GM12878 (cell line): ENCODE measurements at regions of chr6 and their contacts with region 1.

Region 1: GRCh38 chr6:139369568-139370282 is 4.7 kb downstream of the CITED2 start:
- DNase-seq: no peak
- ATAC-seq: no peak
- H3K4me3 ChIP-seq: no peak overlapping the region
- H3K27ac ChIP-seq: no peak overlapping the region
- H3K4me1 ChIP-seq: 0 out of 2 replicates have a peak, but pooled peaks cover 2% of the 10 kb centered on the region
- H3K27me3 ChIP-seq: no peaks in the 10 kb centered on the region
- CTCF ChIP-seq: peak; percentile 43 to 74 (median 60); a peak in 5 of 6 replicates
- EP300 ChIP-seq: no peak
- POLR2A ChIP-seq: no peak
- RAD21 ChIP-seq: peak; percentile 95

Region 2: DNA sequence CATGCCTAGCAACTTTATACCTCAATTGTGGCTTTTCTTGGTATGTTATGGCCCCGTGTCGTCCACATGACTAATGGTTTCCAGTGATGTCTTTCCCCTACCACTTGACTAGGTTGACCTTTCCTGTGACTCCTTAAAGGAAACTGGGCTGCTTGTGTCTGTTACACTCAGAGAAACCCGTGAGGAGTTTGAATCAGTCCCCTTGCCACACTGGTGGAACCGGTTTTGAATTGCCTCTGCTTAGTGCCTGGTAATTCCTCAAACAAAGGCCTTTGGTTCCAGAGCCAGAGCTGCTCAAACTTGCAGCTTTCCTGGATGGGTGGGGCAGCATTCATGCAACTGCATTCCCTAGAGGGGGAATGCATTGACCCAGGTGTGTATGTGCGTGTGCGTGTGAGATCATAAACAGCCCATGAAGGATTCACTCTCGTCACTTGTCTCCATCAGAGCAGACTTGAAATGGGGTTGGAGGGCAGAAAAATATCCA is 551.9 kb before region 1 on chr6:
- CTCF ChIA-PET with region 1: interaction called, 63 read pairs
- POLR2A ChIA-PET with region 1: no interaction called
- RAD21 ChIA-PET with region 1: interaction called, 46 read pairs
- SMC1A ChIA-PET with region 1: interaction called, 38 read pairs
- in situ Hi-C with region 1: loop called (anchors 5 kb)
- intact Hi-C with region 1: loop called (anchors 1 kb)
- DNase-seq: no peak
- ATAC-seq: peak; percentile 51
- H3K4me3 ChIP-seq: no peak overlapping the region
- H3K27ac ChIP-seq: no peak overlapping the region; the same call in 1 of the 2 replicates
- H3K4me1 ChIP-seq: peaks cover 18% of the 10 kb centered on the region
- H3K27me3 ChIP-seq: no peaks in the 10 kb centered on the region
- CTCF ChIP-seq: no peak
- EP300 ChIP-seq: no peak
- POLR2A ChIP-seq: no peak
- RAD21 ChIP-seq: no peak

Region 3: GRCh38 chr6:139230391-139230840 is 139.3 kb before region 1 on chr6:
- CTCF ChIA-PET with region 1: interaction called, 39 read pairs
- POLR2A ChIA-PET with region 1: interaction called, 3 read pairs
- RAD21 ChIA-PET with region 1: interaction called, 49 read pairs
- SMC1A ChIA-PET with region 1: interaction called, 35 read pairs
- in situ Hi-C with region 1: loop called (anchors 5 kb)
- intact Hi-C with region 1: no loop called
- DNase-seq: no peak
- ATAC-seq: 0 out of 3 replicates have a peak, but pooled peaks have one; percentile 18
- H3K4me3 ChIP-seq: no peak overlapping the region
- H3K27ac ChIP-seq: no peak overlapping the region
- H3K4me1 ChIP-seq: no peaks in the 10 kb centered on the region
- H3K27me3 ChIP-seq: no peaks in the 10 kb centered on the region
- CTCF ChIP-seq: peak in 2 of 3 experiments; percentile 17 to 43; a peak in 3 of 6 replicates
- EP300 ChIP-seq: no peak
- POLR2A ChIP-seq: no peak
- RAD21 ChIP-seq: peak; percentile 63

Region 4: GRCh38 chr6:139323511-139324300 is 46.0 kb before region 1 on chr6:
- CTCF ChIA-PET with region 1: interaction called, 11 read pairs
- POLR2A ChIA-PET with region 1: no interaction called
- RAD21 ChIA-PET with region 1: interaction called, 10 read pairs
- SMC1A ChIA-PET with region 1: interaction called, 9 read pairs
- in situ Hi-C with region 1: no loop called
- intact Hi-C with region 1: no loop called
- DNase-seq: no peak
- ATAC-seq: peak; percentile 42
- H3K4me3 ChIP-seq: no peak overlapping the region
- H3K27ac ChIP-seq: peak overlapping the region; percentile 34; the same call in 1 of the 2 replicates
- H3K4me1 ChIP-seq: peaks cover 27% of the 10 kb centered on the region
- H3K27me3 ChIP-seq: no peaks in the 10 kb centered on the region
- CTCF ChIP-seq: no peak
- EP300 ChIP-seq: 0 out of 4 replicates have a peak, but pooled peaks of 1 of the 2 experiments have one; percentile 38
- POLR2A ChIP-seq: no peak
- RAD21 ChIP-seq: no peak

Region 5: DNA sequence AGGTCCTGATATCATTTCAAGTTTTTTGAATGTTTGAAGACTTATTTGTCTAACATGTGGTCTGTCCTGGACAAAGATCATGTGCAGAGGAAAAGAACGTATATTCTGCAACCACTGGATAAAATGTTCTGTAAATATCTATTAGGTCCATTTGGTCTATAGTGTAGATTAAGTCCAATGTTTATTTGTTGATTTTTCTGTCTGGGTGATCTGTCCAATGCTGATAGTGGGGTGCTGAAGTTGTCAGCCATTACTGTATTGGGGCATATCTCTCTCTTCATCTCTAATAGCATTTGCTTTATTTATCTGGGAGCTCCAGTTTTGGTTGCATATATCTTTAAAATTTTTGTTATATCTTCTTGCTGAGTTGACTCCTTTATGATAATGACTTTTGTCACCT is 263.1 kb after region 1 on chr6:
- CTCF ChIA-PET with region 1: no interaction called
- POLR2A ChIA-PET with region 1: no interaction called
- RAD21 ChIA-PET with region 1: no interaction called
- SMC1A ChIA-PET with region 1: no interaction called
- in situ Hi-C with region 1: no loop called
- intact Hi-C with region 1: no loop called
- DNase-seq: no peak
- ATAC-seq: no peak
- H3K4me3 ChIP-seq: no peak overlapping the region
- H3K27ac ChIP-seq: no peak overlapping the region
- H3K4me1 ChIP-seq: no peaks in the 10 kb centered on the region
- H3K27me3 ChIP-seq: no peaks in the 10 kb centered on the region
- CTCF ChIP-seq: no peak
- EP300 ChIP-seq: no peak
- POLR2A ChIP-seq: no peak
- RAD21 ChIP-seq: no peak

Region 6: DNA sequence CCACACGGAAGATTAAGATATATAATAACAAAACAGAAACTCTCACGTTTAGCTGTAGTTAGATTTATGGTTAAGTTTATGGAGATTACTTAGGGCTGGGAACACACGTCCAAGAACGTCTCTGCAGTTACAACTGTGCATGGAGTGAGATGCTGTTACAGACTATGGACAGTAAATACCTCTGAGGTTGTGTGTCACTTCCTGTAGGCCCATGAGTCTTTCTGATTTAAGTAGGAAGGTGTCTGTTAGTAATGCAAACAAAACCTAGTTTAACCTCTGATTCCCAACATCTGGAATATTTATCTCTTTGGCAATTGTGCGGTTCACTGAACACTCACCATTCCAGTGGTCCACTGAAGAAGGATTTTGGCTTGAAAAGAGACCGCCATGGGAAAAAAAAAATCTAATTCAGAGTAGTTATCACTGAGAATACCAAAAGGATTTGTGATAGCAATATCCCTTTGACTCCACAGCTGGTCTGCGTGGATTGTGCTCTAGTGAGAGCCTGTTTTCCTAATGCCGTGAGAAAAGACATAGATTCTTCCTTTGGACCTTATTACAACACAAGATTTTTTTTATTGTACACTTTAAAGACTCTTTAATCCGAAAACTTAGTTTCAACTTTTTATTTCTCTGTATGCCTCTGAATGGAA is 482.9 kb after region 1 on chr6:
- CTCF ChIA-PET with region 1: interaction called, 5 read pairs
- POLR2A ChIA-PET with region 1: no interaction called
- RAD21 ChIA-PET with region 1: interaction called, 3 read pairs
- SMC1A ChIA-PET with region 1: interaction called, 11 read pairs
- in situ Hi-C with region 1: no loop called
- intact Hi-C with region 1: loop called (anchors 10 kb)
- DNase-seq: no peak
- ATAC-seq: no peak
- H3K4me3 ChIP-seq: no peak overlapping the region
- H3K27ac ChIP-seq: no peak overlapping the region
- H3K4me1 ChIP-seq: no peaks in the 10 kb centered on the region
- H3K27me3 ChIP-seq: no peaks in the 10 kb centered on the region
- CTCF ChIP-seq: no peak
- EP300 ChIP-seq: no peak
- POLR2A ChIP-seq: no peak
- RAD21 ChIP-seq: no peak

Region 7: DNA sequence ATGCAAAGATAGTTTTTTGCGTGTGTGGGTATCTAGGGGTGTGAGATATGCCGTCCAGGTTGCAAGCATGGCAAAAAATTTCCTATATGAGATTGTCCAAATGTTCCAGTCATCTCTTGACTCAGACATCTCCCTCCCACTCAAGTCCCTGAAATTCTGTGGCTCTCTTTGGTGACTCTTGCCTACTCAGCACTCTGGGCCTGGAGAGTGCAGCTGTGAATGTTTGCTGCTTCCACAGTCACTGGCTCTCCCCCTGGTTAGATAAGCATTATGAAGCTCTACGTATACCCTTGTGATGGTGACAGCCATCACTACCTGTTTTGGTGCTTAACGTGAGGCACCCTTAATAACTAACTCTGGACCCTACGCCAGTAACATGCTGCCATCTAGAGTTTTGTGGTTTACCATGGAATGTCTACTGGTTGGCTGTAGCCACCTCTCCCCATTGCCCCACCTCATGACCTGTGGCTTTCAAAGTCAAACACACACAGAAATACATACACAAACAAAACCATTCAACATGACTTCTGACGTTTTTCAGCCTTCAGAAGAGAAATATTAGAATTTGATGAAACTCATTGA is 626.6 kb after region 1 on chr6:
- CTCF ChIA-PET with region 1: interaction called, 10 read pairs
- POLR2A ChIA-PET with region 1: no interaction called
- RAD21 ChIA-PET with region 1: interaction called, 16 read pairs
- SMC1A ChIA-PET with region 1: interaction called, 37 read pairs
- in situ Hi-C with region 1: no loop called
- intact Hi-C with region 1: loop called (anchors 1 kb)
- DNase-seq: peak; percentile 35
- ATAC-seq: peak; percentile 87
- H3K4me3 ChIP-seq: no peak overlapping the region
- H3K27ac ChIP-seq: no peak overlapping the region
- H3K4me1 ChIP-seq: no peaks in the 10 kb centered on the region
- H3K27me3 ChIP-seq: no peaks in the 10 kb centered on the region
- CTCF ChIP-seq: peak; percentile 9 to 32 (median 30); a peak in 4 of 6 replicates
- EP300 ChIP-seq: no peak
- POLR2A ChIP-seq: no peak
- RAD21 ChIP-seq: peak; percentile 58; the same call in 1 of the 2 replicates

Region 8: GRCh38 chr6:140921366-140922226 is 1551.9 kb after region 1 on chr6:
- CTCF ChIA-PET with region 1: interaction called, 14 read pairs
- POLR2A ChIA-PET with region 1: no interaction called
- RAD21 ChIA-PET with region 1: interaction called, 13 read pairs
- SMC1A ChIA-PET with region 1: interaction called, 14 read pairs
- in situ Hi-C with region 1: no loop called
- intact Hi-C with region 1: loop called (anchors 2 kb)
- DNase-seq: no peak
- ATAC-seq: peak; percentile 87
- H3K4me3 ChIP-seq: no peak overlapping the region
- H3K27ac ChIP-seq: no peak overlapping the region
- H3K4me1 ChIP-seq: no peaks in the 10 kb centered on the region
- H3K27me3 ChIP-seq: no peaks in the 10 kb centered on the region
- CTCF ChIP-seq: peak; percentile 57 to 77 (median 60); a peak in 5 of 6 replicates
- EP300 ChIP-seq: no peak
- POLR2A ChIP-seq: no peak
- RAD21 ChIP-seq: peak; percentile 92